BJ (cell line): ENCODE measurements at regions of chr15 and their contacts with region 1.

Region 1: GRCh38 chr15:78625606-78626280 is 4.9 kb upstream of the CHRNA3 start:
- DNase-seq: no peak
- H3K4me3 ChIP-seq: no peak overlapping the region
- H3K27me3 ChIP-seq: peaks cover 30% of the 10 kb centered on the region
- CTCF ChIP-seq: no peak

Region 2: GRCh38 chr15:78638658-78639314 is 13.0 kb after region 1 on chr15:
- CTCF ChIA-PET with region 1: interaction called, 13 read pairs
- POLR2A ChIA-PET with region 1: no interaction called
- DNase-seq: no peak
- H3K4me3 ChIP-seq: no peak overlapping the region
- H3K27me3 ChIP-seq: peaks cover 14% of the 10 kb centered on the region
- CTCF ChIP-seq: peak; percentile 62

Region 3: GRCh38 chr15:78944669-78945407 is 319.1 kb after region 1 on chr15 and contains the start of gene CTSH:
- CTCF ChIA-PET with region 1: no interaction called
- POLR2A ChIA-PET with region 1: no interaction called
- DNase-seq: no peak
- H3K4me3 ChIP-seq: peak within 1 kb of the TSS; percentile 46
- H3K27me3 ChIP-seq: peaks cover 5% of the 10 kb centered on the region
- CTCF ChIP-seq: no peak
- polyA plus RNA-seq, gene CTSH: 30.9 and 40.2 TPM in 2 replicates